AG04450 (cell line): ENCODE measurements at regions of chr3 and their contacts with region 1.

Region 1: DNA sequence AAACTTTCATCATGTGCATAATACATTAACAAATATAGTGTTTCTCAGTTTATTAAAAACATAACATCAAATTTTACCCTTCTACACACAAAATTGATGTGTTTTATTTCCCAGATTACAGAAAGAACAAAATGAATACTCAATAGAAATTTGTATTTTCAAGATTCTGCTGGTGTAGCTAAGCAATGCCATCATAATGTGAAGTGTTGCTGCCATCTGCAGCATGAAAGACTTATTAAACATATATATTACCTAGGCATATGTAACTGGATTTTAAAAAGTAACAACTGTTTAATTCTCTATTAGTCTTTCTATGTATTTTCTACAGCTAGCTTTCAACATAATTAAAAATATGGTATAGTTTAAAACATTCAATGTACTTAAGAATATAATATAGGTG is 27.5 kb downstream of the PLSCR5 start:
- DNase-seq: peak; percentile 43
- H3K4me3 ChIP-seq: no peak overlapping the region
- H3K27ac ChIP-seq: no peak overlapping the region
- H3K27me3 ChIP-seq: no peaks in the 10 kb centered on the region
- CTCF ChIP-seq: peak; percentile 47

Region 2: DNA sequence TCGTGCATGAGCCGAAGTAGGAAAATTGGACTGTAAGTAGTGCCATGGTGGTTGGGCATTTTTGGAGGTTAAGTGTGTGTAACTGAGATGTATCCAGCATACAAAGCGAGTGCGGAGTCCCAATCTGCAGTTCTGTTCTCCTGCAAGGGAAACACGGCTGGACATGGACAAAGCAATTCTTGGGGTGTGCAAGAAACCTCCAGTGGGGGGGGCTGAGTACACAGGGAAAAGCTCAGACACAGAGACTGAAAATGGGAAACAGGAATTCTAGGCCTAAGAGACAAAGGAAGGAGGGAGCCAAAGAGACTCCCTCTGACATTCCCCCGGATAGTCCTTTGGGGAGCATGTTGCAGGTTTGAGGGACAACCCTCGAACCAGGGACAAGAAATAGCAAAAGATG is 243.5 kb before region 1 on chr3:
- CTCF ChIA-PET with region 1: interaction called, 36 read pairs
- POLR2A ChIA-PET with region 1: no interaction called
- DNase-seq: no peak
- H3K4me3 ChIP-seq: no peak overlapping the region
- H3K27ac ChIP-seq: no peak overlapping the region
- H3K27me3 ChIP-seq: no peaks in the 10 kb centered on the region
- CTCF ChIP-seq: peak; percentile 28; the same call in 1 of the 2 replicates

Region 3: DNA sequence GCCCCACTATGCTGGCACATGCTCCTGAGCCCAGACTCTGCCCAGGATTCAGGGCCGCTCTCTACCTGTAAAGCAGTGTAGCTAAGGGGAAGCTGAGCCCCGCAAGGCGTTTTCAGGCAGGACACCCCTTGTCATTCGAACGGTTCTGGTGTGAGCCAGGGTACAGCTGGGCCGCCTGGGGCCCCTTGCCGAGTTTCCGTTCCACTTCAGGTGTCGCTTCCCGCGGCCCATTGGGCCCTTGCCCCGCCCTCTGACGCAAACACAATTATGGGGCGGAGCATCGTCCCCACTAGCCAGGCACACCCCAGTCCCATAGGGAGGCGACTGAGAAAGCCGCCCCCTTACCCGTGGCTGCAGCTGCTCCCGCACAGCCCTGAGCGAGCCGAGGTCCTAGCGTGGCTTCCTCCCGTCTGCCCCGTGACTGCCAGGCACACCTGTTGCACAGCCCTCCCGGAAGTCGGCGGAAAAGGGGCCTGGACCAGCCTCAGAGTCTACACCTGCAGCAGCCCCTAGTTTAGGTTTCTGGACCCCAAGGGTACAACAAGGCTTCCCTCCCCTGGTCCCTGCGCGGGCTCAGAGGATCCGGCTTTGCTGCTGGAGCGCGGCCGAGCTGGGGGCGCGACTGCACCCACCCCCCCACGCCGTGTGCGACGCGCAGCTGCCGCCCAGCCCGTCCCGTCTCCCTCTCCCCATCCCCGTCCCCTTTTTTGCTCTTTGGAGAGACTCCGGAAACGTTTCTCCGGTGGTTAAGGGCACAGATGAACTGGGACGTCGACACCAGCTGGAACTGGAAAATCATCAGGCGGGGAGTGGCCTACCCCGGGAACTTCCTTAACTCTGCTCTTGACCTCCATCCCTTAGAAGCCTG is 108.3 kb before region 1 on chr3 and contains the start of gene PLSCR2:
- CTCF ChIA-PET with region 1: no interaction called
- POLR2A ChIA-PET with region 1: no interaction called
- DNase-seq: no peak
- H3K4me3 ChIP-seq: peak within 1 kb of the TSS; percentile 46
- H3K27ac ChIP-seq: no peak within 1 kb of the TSS
- H3K27me3 ChIP-seq: no peaks in the 10 kb centered on the region
- CTCF ChIP-seq: no peak
- polyA plus RNA-seq, gene PLSCR2: not detected in 2 replicates

Region 4: DNA sequence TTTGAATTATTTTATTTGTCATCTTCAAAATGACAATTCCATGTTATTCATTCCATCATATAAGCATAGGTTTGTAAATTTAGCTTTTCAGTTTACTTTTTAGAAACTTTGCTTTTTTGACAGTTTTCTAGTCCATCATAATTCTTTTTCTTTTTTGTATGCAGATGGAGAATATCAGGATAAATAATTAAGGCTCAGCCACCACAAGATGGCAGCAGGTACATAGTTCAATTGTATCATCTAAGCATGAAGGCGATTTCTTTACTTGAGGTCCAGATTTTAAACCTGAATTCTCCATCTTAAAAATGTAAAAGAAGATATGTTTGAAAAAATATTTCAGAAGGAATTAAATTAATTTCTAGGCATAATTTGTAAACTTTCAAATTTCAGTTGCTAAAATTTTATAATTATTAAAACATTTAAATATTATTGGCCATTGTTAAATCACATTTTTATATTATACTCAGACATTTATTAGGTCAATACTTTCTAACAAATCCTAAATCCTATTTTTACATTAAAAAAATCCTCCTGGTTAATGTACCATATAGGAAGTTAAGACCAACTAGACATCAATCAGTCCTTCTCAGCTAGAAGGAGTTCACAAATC is 12.3 kb after region 1 on chr3:
- CTCF ChIA-PET with region 1: interaction called, 13 read pairs
- POLR2A ChIA-PET with region 1: interaction called, 4 read pairs
- DNase-seq: peak; percentile 15
- H3K4me3 ChIP-seq: no peak overlapping the region
- H3K27ac ChIP-seq: no peak overlapping the region
- H3K27me3 ChIP-seq: no peaks in the 10 kb centered on the region
- CTCF ChIP-seq: peak; percentile 61